Dorsolateral prefrontal cortex (tissue), 120 donors: ENCODE measurements at regions of chr3 and their contacts with region 1.

Region 1: DNA sequence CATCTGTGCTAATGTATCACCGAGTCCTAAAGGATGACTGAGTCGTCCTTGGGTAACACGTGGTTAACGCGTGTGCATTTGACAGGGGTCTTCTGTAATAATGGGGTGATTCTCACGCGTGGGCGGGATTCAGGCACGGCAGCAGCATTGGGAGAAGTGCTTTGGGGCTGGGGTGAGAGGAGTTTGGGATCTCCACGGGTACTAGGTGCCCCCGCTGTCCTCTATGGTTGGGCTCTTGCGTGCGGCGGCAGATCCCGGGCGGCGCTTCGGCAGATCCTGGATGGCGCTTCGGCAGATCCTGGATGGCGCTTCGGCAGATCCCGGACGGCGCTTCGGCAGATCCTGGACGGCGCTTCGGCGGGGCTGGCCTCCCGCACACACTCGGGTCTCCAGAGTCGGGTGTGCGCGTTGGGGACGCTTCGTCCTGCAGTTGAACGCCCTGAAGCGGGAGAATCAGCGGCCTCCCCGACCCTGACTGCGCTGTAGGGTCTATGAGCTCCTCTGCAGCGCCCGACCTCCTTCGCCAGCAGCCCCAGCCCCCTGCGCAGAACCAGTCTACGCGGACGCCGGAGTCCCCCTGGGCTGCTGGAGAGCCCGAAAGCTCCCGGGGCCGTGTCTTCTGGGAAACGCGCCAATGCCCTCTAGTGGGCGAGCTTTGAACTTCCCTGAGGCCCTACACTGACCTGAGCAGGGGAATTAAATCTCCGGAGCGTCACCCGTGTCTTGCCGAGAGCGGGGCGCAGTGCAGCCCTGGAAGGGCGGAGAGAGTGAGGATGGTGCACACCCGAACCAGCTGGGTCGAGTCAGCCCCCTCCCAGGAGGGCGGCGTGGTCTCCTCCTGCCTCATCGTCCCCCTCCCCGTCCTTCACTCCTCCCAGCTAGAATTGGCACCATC is 48.1 kb upstream of the EPHB3 start:
- DNase-seq: peak; percentile 69 to 90 (median 78)
- H3K4me3 ChIP-seq: peak overlapping the region; percentile 6 to 72 (median 49)
- H3K27ac ChIP-seq: peak overlapping the region in 6 of 59 donors; percentile 5 to 56 (median 38)
- H3K27me3 ChIP-seq: peaks cover 0 to 51% (median 19%) of the 10 kb centered on the region in 45 donors
- CTCF ChIP-seq: peak; percentile 44 to 89 (median 80)

Region 2: GRCh38 chr3:184371570-184372018 is 141.9 kb before region 1 on chr3:
- intact Hi-C with region 1: loop called in 1 of 2 experiments (anchors 1 kb)
- DNase-seq: peak in 9 of 10 donors; percentile 65 to 87 (median 83)
- H3K4me3 ChIP-seq: no peak overlapping the region
- H3K27ac ChIP-seq: peak overlapping the region in 38 of 59 donors; percentile 0 to 66 (median 36)
- H3K27me3 ChIP-seq: no peaks in the 10 kb centered on the region
- CTCF ChIP-seq: peak; percentile 52 to 98 (median 90)

Region 3: GRCh38 chr3:184405075-184406030 is 108.2 kb before region 1 on chr3:
- intact Hi-C with region 1: no loop called
- DNase-seq: peak in 2 of 10 donors; percentile 34 to 55
- H3K4me3 ChIP-seq: no peak overlapping the region
- H3K27ac ChIP-seq: no peak overlapping the region
- H3K27me3 ChIP-seq: peaks cover 0 to 13% (median 0%) of the 10 kb centered on the region in 45 donors
- CTCF ChIP-seq: no peak

Region 4: GRCh38 chr3:184417619-184418327 is 95.8 kb before region 1 on chr3:
- intact Hi-C with region 1: loop called in 1 of 2 experiments (anchors 5 kb)
- DNase-seq: peak; percentile 36 to 77 (median 58)
- H3K4me3 ChIP-seq: peak overlapping the region in 1 of 59 donors; percentile 43
- H3K27ac ChIP-seq: no peak overlapping the region
- H3K27me3 ChIP-seq: no peaks in the 10 kb centered on the region
- CTCF ChIP-seq: peak; percentile 61 to 90 (median 82)